Ovary (tissue), 10 donors: ENCODE measurements at regions of chr16 and their contacts with region 1.

Region 1: GRCh38 chr16:30091474-30092372 is at the start of gene TBX6:
- DNase-seq: peak; percentile 89 to 95 (median 92)
- H3K4me3 ChIP-seq: peak within 1 kb of the TSS; percentile 47
- H3K27ac ChIP-seq: peak within 1 kb of the TSS; percentile 66 to 70
- H3K4me1 ChIP-seq: peaks cover 12% of the 10 kb centered on the region
- H3K27me3 ChIP-seq: no peaks in the 10 kb centered on the region
- CTCF ChIP-seq: peak; percentile 79 to 99 (median 97)
- EP300 ChIP-seq: no peak
- POLR2A ChIP-seq: no peak
- total RNA-seq, gene TBX6: 0.23 to 1.5 (median 0.75) TPM

Region 2: GRCh38 chr16:29983420-29984136 is 108.1 kb before region 1 on chr16:
- intact Hi-C with region 1: no loop called
- DNase-seq: no peak
- H3K4me3 ChIP-seq: no peak overlapping the region
- H3K27ac ChIP-seq: no peak overlapping the region
- H3K4me1 ChIP-seq: no peaks in the 10 kb centered on the region
- H3K27me3 ChIP-seq: no peaks in the 10 kb centered on the region
- CTCF ChIP-seq: no peak
- EP300 ChIP-seq: no peak
- POLR2A ChIP-seq: no peak

Region 3: GRCh38 chr16:30065143-30065850 is 26.4 kb before region 1 on chr16 and contains the start of gene ALDOA:
- intact Hi-C with region 1: loop called in 1 of 4 experiments (anchors 2 kb)
- DNase-seq: peak; percentile 98
- H3K4me3 ChIP-seq: peak within 1 kb of the TSS; percentile 97
- H3K27ac ChIP-seq: peak within 1 kb of the TSS; percentile 91 to 99
- H3K4me1 ChIP-seq: peaks cover 21% of the 10 kb centered on the region
- H3K27me3 ChIP-seq: no peaks in the 10 kb centered on the region
- CTCF ChIP-seq: peak in 1 of 3 donors; percentile 38
- EP300 ChIP-seq: peak; percentile 65
- POLR2A ChIP-seq: peak; percentile 91
- total RNA-seq, gene ALDOA: 395 to 1,259 (median 847) TPM

Region 4: DNA sequence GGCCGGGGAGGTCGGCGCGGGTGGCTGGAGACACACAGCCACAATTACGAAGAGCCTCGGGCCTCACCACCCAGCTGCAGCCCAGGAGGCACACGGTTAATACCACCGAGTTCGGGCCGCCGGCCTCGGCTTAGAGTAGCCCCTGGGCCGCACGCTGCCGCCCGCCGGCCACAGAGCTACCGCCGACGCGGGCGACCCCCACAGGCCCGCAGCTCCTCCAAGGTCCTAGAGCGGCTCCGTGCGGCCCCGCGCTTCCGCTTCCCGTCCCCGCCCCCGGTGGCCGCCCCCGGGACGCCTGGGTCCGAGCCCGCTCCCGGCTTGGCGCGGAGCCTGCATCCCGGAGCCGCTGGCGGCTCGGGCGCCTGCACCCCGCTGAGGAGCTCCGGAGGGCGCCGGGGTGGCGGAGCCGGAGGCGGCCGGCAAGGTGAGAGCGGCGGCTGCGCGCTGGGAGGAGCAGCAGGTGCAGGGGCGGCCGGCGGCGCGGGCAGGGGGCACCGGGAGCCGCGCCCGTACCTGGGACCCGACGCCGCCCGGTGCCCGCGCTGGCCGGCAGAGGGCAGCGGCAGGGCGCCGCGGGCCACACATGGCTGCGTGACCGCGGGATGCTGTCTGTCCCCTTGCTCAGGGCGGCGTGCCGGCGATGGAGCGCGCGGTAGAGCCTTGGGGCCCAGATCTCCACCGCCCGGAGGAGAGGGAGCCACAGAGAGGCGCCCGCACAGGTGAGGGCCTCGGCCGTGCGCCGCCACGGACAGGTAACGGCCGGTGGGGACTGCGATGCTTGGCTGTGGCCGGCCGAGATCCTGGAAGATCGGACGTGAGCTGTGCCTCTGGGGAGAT is 303.6 kb after region 1 on chr16 and contains the start of gene ZNF48:
- intact Hi-C with region 1: loop called in 1 of 4 experiments (anchors 10 kb)
- DNase-seq: peak; percentile 82 to 92 (median 84)
- H3K4me3 ChIP-seq: peak within 1 kb of the TSS; percentile 78
- H3K27ac ChIP-seq: no peak within 1 kb of the TSS
- H3K4me1 ChIP-seq: peaks cover 2% of the 10 kb centered on the region
- H3K27me3 ChIP-seq: no peaks in the 10 kb centered on the region
- CTCF ChIP-seq: peak; percentile 5 to 61 (median 8)
- EP300 ChIP-seq: no peak
- POLR2A ChIP-seq: no peak
- total RNA-seq, gene ZNF48: 6.2 to 9.8 (median 6.7) TPM

Region 5: DNA sequence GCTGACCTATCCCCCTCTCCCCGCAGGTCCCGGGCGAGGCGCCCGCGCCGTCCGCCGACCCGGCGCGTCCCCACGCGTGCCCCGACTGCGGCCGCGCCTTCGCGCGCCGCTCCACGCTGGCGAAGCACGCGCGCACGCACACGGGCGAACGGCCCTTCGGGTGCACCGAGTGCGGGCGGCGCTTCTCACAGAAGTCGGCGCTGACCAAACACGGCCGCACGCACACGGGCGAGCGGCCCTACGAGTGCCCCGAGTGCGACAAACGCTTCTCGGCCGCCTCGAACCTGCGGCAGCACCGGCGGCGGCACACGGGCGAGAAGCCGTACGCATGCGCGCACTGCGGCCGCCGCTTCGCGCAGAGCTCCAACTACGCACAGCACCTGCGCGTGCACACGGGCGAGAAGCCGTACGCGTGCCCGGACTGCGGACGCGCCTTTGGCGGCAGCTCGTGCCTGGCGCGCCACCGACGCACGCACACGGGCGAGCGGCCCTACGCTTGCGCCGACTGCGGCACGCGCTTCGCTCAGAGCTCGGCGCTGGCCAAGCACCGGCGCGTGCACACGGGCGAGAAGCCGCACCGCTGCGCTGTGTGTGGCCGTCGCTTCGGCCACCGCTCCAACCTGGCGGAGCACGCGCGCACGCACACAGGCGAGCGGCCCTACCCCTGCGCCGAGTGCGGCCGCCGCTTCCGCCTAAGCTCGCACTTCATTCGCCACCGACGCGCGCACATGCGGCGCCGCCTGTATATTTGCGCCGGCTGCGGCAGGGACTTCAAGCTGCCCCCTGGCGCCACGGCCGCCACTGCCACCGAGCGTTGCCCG is 326.0 kb after region 1 on chr16:
- intact Hi-C with region 1: loop called in 2 of 4 experiments (anchors 5 to 10 kb)
- DNase-seq: peak; percentile 75 to 91 (median 84)
- H3K4me3 ChIP-seq: peak overlapping the region; percentile 46
- H3K27ac ChIP-seq: peak overlapping the region; percentile 3 to 69
- H3K4me1 ChIP-seq: peaks cover 5% of the 10 kb centered on the region
- H3K27me3 ChIP-seq: no peaks in the 10 kb centered on the region
- CTCF ChIP-seq: no peak
- EP300 ChIP-seq: no peak
- POLR2A ChIP-seq: no peak